Activated CD4-positive, alpha-beta T cell treated with anti-CD3 and anti-CD28 coated beads for 36 hours (primary cell): ENCODE measurements at regions of chr1 and their contacts with region 1.

Region 1: DNA sequence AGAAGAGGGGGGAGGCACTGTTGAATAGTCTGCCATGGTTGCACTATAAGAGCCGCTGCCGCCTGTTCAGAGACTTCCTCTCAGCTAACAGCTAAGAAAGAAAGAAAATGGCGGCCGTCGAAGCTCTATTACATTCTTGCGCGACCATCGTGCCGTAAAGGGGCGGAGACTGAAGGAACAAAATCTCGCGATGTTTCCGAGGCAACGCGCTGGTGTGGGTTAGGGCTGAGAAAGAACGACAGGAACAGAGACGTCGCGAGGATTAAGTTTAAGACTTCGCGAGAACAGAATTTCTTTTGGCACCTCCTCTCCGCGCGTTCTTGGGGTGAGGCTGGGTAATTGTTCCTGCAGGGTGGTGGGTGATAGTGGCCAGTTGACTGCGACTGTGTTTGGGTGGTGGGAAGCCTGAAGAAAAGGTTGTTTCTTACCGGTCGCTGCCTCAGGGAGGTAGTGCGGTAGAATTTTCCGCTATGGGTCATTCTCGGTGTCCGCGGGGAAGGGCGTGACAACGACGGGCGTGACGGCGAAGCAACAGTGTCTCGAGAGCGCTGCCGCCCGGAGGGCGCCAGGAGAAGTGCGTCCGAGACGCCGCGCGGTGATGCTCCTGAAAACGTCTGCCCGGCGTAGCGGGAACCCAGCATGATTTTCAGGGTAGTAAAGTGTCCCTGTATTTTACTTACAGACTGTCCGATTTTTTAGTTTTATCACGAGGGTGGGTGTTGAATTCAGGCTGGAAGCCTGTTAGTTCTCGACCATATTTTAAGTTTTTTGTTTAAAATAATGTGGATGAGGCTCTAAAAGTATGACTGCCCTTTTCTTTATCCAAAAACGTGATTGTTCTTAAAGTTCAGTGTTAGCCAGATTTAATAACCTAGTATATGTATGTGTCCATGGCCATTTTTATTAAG is at the start of gene FUBP1:
- DNase-seq: peak; percentile 97
- ATAC-seq: peak; percentile 81
- H3K4me3 Mint-ChIP-seq: no peak within 1 kb of the TSS
- H3K27ac Mint-ChIP-seq: no peak within 1 kb of the TSS
- H3K4me1 Mint-ChIP-seq: peaks cover 47% of the 10 kb centered on the region
- H3K27me3 Mint-ChIP-seq: no peaks in the 10 kb centered on the region
- total RNA-seq, gene FUBP1: 240 to 258 TPM

Region 2: DNA sequence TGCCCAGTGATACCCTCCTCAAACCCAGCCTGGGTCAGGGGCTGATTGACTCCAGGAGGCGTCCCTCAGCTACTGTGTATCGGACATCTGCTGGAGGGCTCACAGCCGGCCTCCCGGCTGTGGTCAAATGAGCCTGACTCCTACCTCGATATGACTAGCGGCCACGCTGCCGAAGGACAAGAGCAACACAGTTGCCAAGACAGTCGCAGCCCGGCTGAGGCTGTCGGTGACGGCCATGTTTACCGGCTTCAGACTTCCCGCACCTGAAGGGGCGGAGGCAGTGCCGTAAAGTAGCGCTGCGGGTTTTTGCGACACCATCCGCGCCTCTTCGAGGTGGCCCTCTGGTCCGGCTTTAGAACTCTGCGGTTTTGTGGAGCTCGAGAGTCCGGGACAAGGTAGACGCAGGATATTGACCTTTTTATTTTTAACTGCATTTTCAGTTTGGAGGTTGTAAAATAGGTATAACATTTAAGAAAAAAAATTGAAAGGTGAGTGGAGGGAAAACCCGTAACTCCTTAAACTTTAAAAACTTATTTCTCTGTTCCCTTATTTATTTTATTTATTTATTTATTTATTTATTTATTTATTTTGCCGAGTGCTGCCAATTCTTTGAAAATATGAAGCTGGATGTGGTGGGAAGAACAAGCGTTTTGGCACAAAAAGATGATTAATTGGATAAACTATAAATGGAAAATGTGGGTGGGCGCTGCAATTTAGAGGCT is 759.9 kb before region 1 on chr1 and contains the start of gene PIGK:
- CTCF ChIA-PET with region 1: no interaction called
- POLR2A ChIA-PET with region 1: no interaction called
- intact Hi-C with region 1: loop called in 1 of 2 experiments (anchors 10 kb)
- DNase-seq: peak; percentile 94
- ATAC-seq: peak; percentile 93
- H3K4me3 Mint-ChIP-seq: peak within 1 kb of the TSS; percentile 92
- H3K27ac Mint-ChIP-seq: peak within 1 kb of the TSS; percentile 92
- H3K4me1 Mint-ChIP-seq: peaks cover 38% of the 10 kb centered on the region
- H3K27me3 Mint-ChIP-seq: no peaks in the 10 kb centered on the region
- total RNA-seq, gene PIGK: 19.3 to 19.7 TPM

Region 3: DNA sequence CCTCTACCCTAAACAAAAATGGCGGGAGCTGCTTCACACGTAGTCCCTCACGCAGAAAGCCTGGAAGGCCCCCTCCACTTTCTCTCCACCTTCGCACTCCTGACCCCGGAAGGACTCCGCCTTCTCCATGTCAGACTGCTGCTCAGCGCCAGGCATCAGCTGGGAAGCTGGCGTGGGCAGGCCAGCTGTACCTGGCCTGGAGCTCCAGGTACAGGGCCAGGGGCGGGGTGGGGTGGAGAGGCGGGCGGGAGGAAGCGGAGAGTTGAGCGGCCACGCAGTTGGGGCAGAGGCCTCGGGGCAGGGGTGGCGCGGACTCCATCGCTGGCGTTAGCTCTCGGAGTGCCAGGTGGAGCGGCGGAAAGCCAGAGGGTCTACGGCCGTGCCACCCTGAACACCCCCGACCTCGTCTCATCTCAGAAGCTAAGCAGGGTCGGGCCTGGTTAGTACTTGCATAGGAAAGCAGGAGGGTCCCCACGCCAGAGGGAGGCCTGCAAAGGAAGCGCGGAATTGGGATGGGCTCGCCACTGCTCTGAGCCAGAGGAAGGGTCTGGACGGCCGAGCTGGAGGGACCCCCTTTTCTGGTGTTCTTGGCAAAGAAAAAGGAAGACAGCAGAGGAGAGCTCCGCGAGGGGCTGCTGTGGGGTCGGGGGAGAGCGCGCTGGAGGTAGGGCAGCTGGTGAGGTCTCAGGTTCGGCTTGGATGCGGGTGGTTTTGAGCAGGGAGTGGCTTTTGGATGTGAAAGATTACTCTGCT is 199.5 kb before region 1 on chr1 and contains the start of gene MIGA1:
- CTCF ChIA-PET with region 1: no interaction called
- POLR2A ChIA-PET with region 1: interaction called, 13 read pairs
- intact Hi-C with region 1: loop called (anchors 1 kb)
- DNase-seq: peak; percentile 91
- ATAC-seq: peak; percentile 96
- H3K4me3 Mint-ChIP-seq: peak within 1 kb of the TSS; percentile 91
- H3K27ac Mint-ChIP-seq: peak within 1 kb of the TSS; percentile 93
- H3K4me1 Mint-ChIP-seq: peaks cover 34% of the 10 kb centered on the region
- H3K27me3 Mint-ChIP-seq: no peaks in the 10 kb centered on the region
- total RNA-seq, gene MIGA1: 7.2 to 9.0 TPM

Region 4: GRCh38 chr1:77994117-77994705 is 15.0 kb after region 1 on chr1:
- CTCF ChIA-PET with region 1: interaction called, 9 read pairs
- POLR2A ChIA-PET with region 1: interaction called, 3 read pairs
- intact Hi-C with region 1: loop called in 1 of 2 experiments (anchors 1 kb)
- DNase-seq: no peak
- ATAC-seq: no peak
- H3K4me3 Mint-ChIP-seq: no peak overlapping the region
- H3K27ac Mint-ChIP-seq: no peak overlapping the region
- H3K4me1 Mint-ChIP-seq: peaks cover 17% of the 10 kb centered on the region
- H3K27me3 Mint-ChIP-seq: no peaks in the 10 kb centered on the region

Region 5: GRCh38 chr1:78045926-78046778 is 66.9 kb after region 1 on chr1 and contains the start of gene GIPC2:
- CTCF ChIA-PET with region 1: interaction called, 5 read pairs
- POLR2A ChIA-PET with region 1: interaction called, 5 read pairs
- intact Hi-C with region 1: loop called (anchors 2 to 5 kb)
- DNase-seq: peak; percentile 62
- ATAC-seq: peak; percentile 72
- H3K4me3 Mint-ChIP-seq: peak within 1 kb of the TSS; percentile 66
- H3K27ac Mint-ChIP-seq: no peak within 1 kb of the TSS
- H3K4me1 Mint-ChIP-seq: peaks cover 29% of the 10 kb centered on the region
- H3K27me3 Mint-ChIP-seq: peaks cover 33% of the 10 kb centered on the region
- total RNA-seq, gene GIPC2: 0.05 to 0.09 TPM

Region 6: DNA sequence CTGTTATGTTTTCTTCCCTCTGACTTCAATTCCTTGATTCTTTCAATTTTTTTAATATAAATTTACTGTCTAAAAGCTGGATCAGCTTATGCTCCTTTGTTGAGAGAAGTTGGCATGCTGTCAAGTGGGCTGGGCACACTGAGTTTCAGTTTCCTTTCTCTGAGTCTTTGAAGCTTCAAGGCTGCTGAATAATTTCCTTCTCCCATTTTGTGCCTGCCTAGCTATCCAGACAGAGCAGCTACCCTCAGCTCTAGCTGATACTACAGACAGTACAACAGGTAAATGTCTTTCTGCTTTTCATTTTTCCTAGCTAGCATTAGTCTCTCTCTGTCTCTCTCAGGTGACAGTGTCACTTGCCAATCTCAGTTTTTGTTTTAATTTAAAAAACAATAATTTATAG is 670.4 kb after region 1 on chr1 and contains the start of gene IFI44:
- CTCF ChIA-PET with region 1: no interaction called
- POLR2A ChIA-PET with region 1: no interaction called
- intact Hi-C with region 1: loop called in 1 of 2 experiments (anchors 10 kb)
- DNase-seq: peak; percentile 86
- ATAC-seq: peak; percentile 85
- H3K4me3 Mint-ChIP-seq: peak within 1 kb of the TSS; percentile 76
- H3K27ac Mint-ChIP-seq: peak within 1 kb of the TSS; percentile 84
- H3K4me1 Mint-ChIP-seq: peaks cover 59% of the 10 kb centered on the region
- H3K27me3 Mint-ChIP-seq: no peaks in the 10 kb centered on the region
- total RNA-seq, gene IFI44: 43.1 to 55.4 TPM

Region 7: GRCh38 chr1:78854556-78854955 is 875.3 kb after region 1 on chr1:
- CTCF ChIA-PET with region 1: no interaction called
- POLR2A ChIA-PET with region 1: no interaction called
- intact Hi-C with region 1: no loop called
- DNase-seq: no peak
- ATAC-seq: no peak
- H3K4me3 Mint-ChIP-seq: no peak overlapping the region
- H3K27ac Mint-ChIP-seq: no peak overlapping the region
- H3K4me1 Mint-ChIP-seq: peaks cover 2% of the 10 kb centered on the region
- H3K27me3 Mint-ChIP-seq: peaks cover 7% of the 10 kb centered on the region